ENCODE measurements at regions of chr4 and their contacts with region 1.

Region 1: DNA sequence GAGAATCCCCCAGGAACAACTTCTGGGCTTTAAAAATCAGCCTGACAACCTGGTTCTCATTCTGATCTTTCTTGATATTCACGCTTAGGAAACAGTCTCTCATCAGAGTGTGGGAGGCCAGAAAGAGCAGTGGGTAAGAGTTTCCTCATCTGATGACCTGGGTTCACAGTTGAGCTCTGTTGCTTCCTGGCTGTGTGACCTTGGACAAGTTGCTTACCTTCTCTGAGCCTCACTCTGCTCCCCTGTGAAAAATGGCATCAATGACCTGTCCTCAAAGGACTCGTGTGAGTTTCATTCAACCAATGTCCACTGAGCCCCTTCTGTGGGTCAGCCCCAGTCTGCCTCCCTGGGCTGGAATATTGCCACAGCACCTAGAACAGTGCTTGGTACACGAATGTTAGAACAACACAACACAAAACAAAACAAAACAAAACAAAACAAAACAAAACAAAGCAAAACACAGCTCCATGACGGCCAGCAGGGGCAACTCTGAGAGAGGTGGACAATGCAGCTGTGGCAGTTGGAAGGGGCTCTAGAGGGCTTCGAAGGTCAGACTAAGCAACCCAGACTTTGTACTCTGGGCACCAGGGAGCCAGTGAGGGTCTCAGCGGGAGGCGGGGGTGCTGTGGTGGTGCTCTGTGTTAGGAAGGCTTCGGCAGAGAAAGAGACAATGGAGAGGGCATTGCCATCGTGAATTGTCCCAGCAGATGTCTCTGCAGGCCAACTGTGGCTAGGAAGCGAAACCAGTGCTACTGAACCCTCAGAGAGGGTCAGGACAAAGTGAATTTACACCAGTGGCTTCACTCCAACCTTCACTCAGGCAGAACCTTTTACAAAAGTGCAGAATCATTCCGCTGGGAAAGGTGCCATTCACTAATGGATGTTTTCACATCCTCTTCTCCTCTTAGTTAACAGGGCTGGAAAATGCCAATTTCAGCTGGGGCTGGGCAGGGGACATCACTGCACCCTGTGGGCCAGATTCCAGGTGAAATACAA is 14.3 kb upstream of the C4orf50 start:
- DNase-seq: no peak
- ATAC-seq: no peak
- H3K4me3 Mint-ChIP-seq: no peak overlapping the region
- H3K27ac Mint-ChIP-seq: 0 out of 2 replicates have a peak overlapping the region, but pooled peaks have one; percentile 25
- H3K4me1 Mint-ChIP-seq: peaks cover 13% of the 10 kb centered on the region
- H3K27me3 Mint-ChIP-seq: no peaks in the 10 kb centered on the region
- CTCF ChIP-seq: no peak

Region 2: GRCh38 chr4:6019316-6020263 is 13.0 kb before region 1 on chr4:
- CTCF ChIA-PET with region 1: interaction called, 10 read pairs
- POLR2A ChIA-PET with region 1: no interaction called
- DNase-seq: peak; percentile 76
- ATAC-seq: peak; percentile 85
- H3K4me3 Mint-ChIP-seq: peak overlapping the region; percentile 1; the same call in 1 of the 2 replicates
- H3K27ac Mint-ChIP-seq: no peak overlapping the region; the same call in 1 of the 2 replicates
- H3K4me1 Mint-ChIP-seq: peaks cover 14% of the 10 kb centered on the region
- H3K27me3 Mint-ChIP-seq: no peaks in the 10 kb centered on the region; the same call in 1 of the 2 replicates
- CTCF ChIP-seq: peak; percentile 86

Measured in WTC11 (cell line).